Left cardiac atrium (tissue), 4 donors: ENCODE measurements at regions of chr4 and their contacts with region 1.

Region 1: GRCh38 chr4:153466081-153466948 is at the start of gene TMEM131L:
- DNase-seq: peak; percentile 77
- ATAC-seq: peak; percentile 92 to 93
- total RNA-seq, gene TMEM131L: 8.1 to 13.1 TPM

Region 2: DNA sequence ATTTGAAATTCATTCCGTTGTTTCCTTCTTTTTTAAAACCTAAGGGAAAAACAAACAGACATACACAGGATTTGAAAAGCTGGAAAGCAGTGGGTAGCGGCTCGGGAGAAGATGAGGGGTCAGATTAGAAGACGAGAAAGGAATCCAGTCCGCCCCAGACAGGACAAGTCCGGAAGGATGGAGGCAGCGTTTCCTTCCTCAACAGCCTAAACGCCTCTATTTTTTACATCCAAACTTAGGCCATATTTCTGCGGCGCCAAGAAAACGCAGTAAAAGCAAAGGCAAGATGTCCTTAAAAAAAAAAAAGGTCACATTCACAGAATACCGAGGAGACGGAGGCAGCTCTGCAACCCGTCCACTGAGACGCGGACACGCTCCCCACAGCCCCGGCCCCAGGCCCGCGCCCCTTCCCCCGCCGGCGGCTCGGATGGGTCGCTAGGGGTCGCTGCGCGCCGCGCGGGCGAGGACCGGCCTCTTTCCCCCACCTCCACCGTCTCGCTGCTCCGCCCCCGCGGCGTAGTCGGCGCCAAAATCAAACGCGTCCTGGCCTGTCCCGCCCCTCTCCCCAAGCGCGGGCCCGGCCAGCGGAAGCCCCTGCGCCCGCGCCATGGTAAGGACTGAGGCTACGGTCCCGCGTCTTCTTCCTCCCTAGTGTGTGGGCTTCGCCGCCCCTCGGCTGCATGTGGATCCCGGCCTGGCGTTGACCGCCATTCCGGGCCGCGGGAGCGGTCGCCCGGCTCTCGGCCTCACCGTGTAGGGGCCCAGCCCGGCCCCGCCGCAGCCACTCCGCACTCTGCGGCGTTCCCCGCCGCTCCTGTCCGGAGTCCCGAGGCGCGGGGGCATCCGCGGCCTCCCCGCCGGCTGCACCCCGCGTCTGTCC is 121.9 kb before region 1 on chr4 and contains the start of gene MND1:
- intact Hi-C with region 1: loop called (anchors 10 kb)
- DNase-seq: peak; percentile 87
- ATAC-seq: peak; percentile 97
- total RNA-seq, gene MND1: 0.62 TPM in 1 of 2 donors, not detected in the other

Region 3: DNA sequence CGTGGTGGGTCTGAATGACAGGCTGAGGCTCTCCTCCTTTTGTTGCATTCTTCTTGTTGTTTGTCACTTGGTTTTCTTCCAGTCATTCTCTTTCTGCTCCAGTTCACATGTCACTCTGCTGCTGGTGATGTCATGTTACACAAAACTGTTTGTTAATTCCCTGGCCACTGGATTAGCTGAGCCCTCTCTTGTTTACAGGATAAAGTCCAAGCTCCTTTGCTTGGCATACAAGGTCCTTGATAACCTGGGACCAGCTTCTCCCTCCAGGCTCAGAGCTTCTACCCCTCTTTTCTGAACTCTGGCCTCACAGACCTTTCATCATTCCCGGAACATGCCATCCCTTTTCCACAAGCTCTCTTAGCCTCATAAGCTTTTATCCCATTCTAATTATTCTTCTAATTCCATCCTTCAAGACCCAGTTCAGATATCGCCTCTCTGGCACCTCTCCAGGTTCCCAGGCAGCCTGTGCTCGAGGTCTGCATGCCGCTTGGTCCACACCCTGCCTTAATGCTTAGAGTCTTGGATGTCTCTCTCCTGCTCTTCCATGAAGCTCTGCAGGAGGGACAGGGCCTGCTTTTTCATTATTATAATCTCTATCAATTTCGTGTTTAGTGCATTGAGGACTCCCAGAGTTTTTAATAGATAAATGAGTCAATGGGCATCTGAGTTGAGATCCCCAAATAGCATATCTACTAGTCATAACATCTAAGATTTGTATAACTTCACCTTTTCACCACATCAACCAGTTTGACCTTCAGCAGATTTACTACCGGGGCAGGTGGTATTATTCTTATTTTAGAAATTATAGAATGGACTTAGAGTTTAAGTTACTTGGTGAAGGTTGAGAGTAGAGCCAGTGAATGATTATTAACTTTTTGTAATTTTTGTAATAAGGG is 98.6 kb after region 1 on chr4:
- intact Hi-C with region 1: loop called (anchors 5 kb)
- DNase-seq: peak; percentile 28
- ATAC-seq: peak; percentile 46 to 78